Posterior cingulate gyrus (tissue), 11 donors: ENCODE measurements at regions of chr6 and their contacts with region 1.

Region 1: DNA sequence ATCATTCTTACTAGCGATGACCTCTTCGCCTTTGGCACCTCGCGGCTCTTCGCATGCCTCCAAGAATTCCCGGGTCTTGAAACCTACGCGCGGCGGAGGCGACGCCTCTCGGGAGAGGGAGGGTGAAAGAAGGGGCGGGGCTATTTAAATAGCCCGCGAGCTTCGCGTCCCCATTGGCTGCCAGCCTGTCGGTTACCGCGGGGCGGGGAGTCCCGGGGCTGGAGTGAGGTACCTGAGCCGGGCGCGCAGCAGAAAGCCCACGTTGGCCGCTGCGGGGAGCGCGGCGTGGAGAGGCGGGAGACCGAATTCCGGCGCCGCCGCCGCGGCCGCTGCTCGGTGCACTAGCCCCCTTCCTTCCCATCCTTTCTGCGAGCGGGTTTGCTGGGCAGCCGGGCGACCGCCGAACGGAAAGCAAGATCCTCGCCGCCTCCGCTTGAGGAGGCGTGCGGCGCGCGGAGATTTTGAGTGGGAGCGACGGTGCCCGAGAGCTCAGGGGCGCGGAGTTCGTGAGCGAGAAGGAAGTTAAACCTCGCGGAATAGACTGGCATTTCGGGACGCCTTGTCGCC is at the start of gene BMP6:
- DNase-seq: peak; percentile 68 to 98 (median 80)

Region 2: GRCh38 chr6:7479801-7480266 is 246.1 kb before region 1 on chr6:
- intact Hi-C with region 1: no loop called
- DNase-seq: no peak

Region 3: GRCh38 chr6:7628479-7628878 is 97.5 kb before region 1 on chr6:
- intact Hi-C with region 1: no loop called
- DNase-seq: no peak

Region 4: GRCh38 chr6:7647504-7647903 is 78.4 kb before region 1 on chr6:
- intact Hi-C with region 1: no loop called
- DNase-seq: no peak

Region 5: DNA sequence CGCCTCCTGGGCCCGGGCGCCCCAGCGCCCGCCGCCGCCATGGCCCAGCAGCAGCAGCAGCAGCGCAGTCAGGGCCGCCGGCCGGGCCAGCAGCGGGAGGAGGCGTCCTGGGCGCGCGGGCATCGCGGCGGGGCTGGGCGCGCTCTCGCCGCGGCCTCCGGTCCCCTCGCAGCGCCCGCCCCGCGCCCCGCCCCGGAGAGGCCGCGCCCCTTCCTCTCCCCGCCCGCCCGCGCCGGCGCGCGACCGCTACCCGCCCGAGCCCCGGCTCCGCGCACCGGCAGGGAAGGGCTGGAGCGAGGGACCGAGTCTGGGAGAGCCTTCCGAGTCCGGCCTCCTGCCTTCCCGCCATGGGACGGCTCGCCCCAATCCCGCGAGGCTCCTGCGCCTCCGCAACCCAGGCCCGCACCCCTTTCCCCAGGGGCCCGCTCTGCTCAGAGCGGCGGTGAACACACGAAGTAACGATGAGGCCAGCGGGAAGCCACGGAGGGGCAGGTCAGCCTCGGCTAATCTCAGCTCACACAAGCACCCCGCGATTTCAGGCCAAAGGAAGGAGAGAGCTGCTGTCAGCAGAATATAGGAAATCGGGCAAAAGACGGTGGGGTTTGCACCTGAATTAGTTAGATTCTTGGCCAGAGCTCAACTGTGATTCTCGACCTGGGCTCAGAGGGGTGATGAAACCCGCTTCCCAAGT is 184.9 kb after region 1 on chr6 and contains the start of gene TXNDC5:
- intact Hi-C with region 1: loop called (anchors 5 kb)
- DNase-seq: peak; percentile 64 to 97 (median 78)

Region 6: DNA sequence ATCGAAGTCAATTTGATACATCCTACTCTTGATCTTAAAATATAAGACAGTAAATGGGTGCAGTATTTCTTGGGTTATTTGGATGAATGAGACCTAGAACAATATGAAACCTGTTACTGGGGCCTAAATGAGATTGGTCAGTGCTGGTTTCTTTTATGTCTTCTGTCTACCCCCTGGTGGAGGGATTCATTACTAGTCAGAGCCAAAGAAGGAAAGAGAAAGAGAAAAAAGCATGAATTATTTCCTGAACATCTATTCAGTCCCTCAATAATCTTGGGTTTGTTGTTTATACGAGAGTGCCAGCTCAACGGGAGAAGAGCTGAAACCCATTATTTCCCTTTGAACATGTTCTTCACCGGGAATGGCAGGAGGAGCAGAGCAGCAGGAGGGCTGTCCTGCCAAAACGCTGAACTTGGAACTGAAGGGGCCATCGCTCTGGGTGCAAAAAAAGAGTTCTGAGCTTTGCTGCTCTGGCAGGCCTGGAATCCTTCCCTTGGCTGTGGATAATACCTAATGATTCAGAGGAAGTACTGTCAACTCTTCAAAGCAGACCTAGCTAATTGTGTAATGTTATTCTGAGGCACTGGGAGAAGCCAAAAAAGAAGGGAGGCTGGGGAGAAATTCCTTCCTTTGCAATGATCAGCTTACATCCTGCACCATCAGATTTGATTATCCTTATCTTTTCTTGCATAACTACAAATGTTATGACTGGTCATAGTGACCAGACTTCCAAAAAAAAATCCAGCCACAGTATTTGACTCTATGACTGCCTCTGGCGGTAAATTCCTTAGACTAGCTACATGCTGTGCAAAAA is 266.3 kb after region 1 on chr6:
- intact Hi-C with region 1: loop called (anchors 5 kb)
- DNase-seq: no peak

Region 7: GRCh38 chr6:8006208-8006607 is 280.3 kb after region 1 on chr6:
- intact Hi-C with region 1: loop called (anchors 5 kb)
- DNase-seq: no peak

Region 8: DNA sequence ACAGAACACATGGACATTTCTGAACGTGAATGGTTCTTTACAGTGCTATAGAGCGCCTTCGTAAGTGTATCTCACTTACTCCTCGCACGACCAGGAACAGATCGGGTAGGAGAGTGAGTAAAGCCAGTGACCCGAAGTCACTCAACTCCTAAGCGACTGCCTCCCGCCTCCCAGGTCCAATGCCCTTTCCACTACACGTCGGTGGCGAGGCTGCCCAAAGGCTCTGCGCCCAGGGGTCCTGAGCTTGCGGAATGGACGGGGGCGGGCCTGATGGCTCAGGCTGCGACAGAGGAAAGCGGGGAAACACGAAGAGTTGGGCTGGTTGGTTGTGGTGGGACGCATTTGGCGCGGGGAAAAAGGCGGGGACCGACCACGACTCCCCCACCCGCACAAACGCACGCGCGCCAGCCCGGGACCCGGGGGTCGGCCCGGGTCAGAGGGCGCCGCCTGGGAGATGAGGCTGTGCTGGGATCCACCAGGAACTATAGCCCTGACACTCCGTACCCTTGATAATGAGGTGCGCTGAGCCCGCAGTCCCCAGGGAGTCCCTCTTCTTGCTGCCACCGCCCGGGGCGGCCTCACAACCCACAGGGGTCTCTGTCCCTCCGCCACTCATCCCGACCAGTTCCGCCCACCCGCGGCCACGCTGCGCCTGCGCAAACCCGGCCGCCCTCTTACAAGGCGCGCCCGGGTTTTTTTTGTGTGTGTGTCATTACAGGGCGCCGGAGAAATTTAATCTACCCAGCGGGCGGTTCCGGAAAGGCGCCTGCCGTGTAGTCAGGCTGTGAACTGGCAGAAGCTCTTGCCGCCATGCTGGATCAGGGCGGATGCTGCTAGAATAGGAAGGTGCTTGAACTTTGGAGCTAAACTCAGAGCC is 338.1 kb after region 1 on chr6 and contains the start of gene BLOC1S5:
- intact Hi-C with region 1: loop called (anchors 2 kb)
- DNase-seq: peak; percentile 88 to 99 (median 94)

Region 9: DNA sequence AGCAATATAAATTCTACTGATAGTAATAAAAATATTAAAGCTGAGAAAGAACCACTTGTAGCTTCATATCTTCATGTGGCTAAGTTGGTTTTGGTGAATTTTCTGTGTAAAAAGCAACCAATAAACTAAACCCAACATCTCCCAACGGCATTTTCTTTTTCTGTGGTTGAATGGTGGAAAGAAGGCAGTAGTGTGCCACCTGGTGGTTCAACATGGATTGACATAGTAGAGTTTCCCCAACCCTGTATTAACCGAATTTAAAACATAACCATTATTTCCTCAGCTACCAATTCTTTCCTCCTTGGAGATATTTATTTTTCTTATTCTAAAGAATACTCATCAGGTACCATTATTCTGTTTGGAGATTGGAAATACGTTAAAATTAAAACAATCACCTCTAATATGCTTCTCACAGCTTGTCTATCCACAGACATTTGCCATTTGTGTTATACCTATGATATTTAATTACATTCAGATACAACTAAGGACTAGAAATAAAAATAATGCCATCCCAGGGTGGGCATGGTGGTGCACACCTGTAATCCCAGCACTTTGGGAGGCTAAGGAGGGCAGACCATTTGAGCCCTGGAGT is 493.5 kb after region 1 on chr6:
- intact Hi-C with region 1: loop called (anchors 5 kb)
- DNase-seq: peak in 3 of 10 donors; percentile 21 to 30 (median 29)